A549 (cell line): ENCODE measurements at regions of chr9 and their contacts with region 1.

Region 1: DNA sequence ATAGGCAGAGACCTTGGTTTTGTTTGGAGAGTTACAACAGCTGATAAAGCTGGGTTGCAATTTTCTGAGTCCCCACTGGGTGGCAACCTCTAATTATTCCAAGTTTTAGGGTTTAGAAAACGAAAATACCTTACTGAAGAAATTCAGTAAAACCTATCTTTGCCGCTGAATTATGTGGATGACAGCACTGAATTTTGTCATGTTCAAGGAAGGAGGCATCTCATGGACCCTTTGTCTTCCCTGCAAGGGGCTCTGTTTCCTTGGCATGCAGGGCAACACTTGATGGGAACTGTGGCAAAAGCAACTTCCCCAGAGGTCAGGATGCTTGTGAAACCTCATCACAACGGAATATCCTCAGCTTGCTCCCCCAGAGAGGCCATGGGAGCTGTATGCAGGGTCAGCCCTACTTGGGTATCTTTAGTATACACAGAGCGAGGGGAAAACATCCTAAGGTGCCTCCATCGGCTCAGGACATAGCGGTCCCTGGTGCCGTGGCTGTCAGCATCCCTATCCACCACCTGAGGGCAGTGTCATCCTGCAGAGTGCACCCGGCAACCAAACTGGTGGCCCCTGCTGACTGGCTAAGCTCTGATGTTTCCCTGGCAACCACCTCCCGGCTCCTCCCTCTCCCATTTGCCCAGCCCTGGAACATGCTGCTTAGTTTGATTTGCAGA is 123.1 kb downstream of the RXRA start:
- DNase-seq: peak; percentile 92 to 98
- ATAC-seq: peak; percentile 92 to 97
- H3K4me3 ChIP-seq: no peak overlapping the region
- H3K27ac ChIP-seq: peak overlapping the region in 1 of 2 experiments; percentile 65; a peak in 2 of 6 replicates
- H3K4me1 ChIP-seq: peaks cover 9% of the 10 kb centered on the region
- CTCF ChIP-seq: peak; percentile 81
- EP300 ChIP-seq: no peak
- POLR2A ChIP-seq: no peak
- RAD21 ChIP-seq: peak; percentile 97 to 99

Region 2: GRCh38 chr9:134413890-134414731 is 35.2 kb before region 1 on chr9:
- CTCF ChIA-PET with region 1: no interaction called
- POLR2A ChIA-PET with region 1: no interaction called
- DNase-seq: peak; percentile 77 to 87
- ATAC-seq: peak; percentile 54 to 84
- H3K4me3 ChIP-seq: no peak overlapping the region
- H3K27ac ChIP-seq: peak overlapping the region; percentile 80 to 100
- H3K4me1 ChIP-seq: peaks cover 63% of the 10 kb centered on the region
- CTCF ChIP-seq: no peak
- EP300 ChIP-seq: no peak
- POLR2A ChIP-seq: no peak
- RAD21 ChIP-seq: peak; percentile 5 to 21; a peak in 2 of 5 replicates

Region 3: DNA sequence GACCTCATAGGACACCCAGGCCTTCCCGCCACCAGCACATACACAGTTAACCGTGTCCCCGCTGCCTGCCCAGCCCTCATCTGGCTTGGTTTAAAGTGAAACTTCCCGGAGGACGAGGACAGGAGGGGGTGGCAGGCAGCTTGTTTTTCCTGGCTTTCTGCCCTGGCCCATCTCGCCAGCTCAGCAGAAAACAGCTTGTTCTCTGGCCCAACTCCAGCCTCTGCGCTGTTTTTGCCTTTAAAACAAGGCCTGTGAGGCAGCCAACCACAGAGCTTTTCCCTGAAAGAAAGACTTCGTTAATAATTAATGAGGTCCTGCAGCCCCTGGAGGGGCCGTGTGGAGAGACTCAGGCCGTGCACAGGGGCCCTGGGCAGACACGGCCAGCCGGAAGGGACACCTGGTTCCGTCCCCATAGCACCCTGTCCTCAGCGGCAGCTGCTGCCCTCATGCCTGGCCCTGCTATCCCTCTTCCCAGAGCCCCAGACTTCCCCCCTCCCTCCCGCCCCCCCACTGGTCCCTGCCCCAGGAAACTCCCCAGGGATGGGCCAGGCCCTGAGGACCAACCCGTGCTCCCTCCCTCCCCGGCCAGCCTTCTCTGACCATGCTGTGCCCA is 14.4 kb before region 1 on chr9:
- CTCF ChIA-PET with region 1: interaction called, 27 read pairs
- POLR2A ChIA-PET with region 1: no interaction called
- DNase-seq: peak; percentile 65 to 88
- ATAC-seq: peak; percentile 57 to 76
- H3K4me3 ChIP-seq: no peak overlapping the region
- H3K27ac ChIP-seq: peak overlapping the region; percentile 80 to 88
- H3K4me1 ChIP-seq: peaks cover 46% of the 10 kb centered on the region
- CTCF ChIP-seq: no peak
- EP300 ChIP-seq: no peak
- POLR2A ChIP-seq: no peak
- RAD21 ChIP-seq: peak in 1 of 2 experiments; percentile 35; a peak in 3 of 5 replicates

Region 4: DNA sequence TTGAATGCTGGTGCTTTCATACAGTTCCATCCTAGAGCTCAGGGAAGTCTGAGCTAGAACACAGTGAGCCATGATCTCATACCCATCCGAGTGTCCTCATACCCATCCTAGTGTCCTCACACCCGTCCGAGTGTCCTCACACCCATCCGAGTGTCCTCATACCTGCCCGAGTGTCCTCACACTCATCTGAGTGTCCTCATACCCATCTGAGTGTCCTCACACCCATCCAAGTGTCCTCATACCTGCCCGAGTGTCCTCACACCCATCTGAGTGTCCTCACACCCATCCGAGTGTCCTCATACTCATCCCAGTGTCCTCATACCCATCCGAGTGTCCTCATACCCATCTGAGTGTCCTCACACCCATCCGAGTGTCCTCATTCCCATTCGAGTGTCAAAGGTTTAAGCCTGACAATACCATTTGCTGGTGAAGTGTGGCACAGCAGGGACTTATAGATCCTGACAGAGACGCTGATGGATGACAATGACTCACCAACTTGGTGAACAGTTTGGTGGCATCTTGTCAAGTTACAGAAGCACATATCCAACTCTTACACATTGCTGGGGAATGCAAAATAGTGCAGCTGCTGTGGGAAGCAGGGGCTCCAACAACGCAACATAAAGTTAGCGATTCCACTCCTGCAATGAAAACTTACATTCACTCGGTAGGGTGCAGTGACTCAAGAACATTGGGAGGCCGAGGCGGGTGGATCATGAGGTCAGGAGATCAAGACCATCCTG is 115.2 kb after region 1 on chr9:
- CTCF ChIA-PET with region 1: interaction called, 15 read pairs
- POLR2A ChIA-PET with region 1: no interaction called
- DNase-seq: no peak
- ATAC-seq: no peak
- H3K4me3 ChIP-seq: no peak overlapping the region
- H3K27ac ChIP-seq: no peak overlapping the region
- H3K4me1 ChIP-seq: no peaks in the 10 kb centered on the region
- CTCF ChIP-seq: no peak
- EP300 ChIP-seq: no peak
- POLR2A ChIP-seq: no peak
- RAD21 ChIP-seq: no peak

Region 5: GRCh38 chr9:134624827-134625181 is 175.4 kb after region 1 on chr9:
- CTCF ChIA-PET with region 1: interaction called, 13 read pairs
- POLR2A ChIA-PET with region 1: no interaction called
- DNase-seq: peak; percentile 71 to 72
- ATAC-seq: peak; percentile 80 to 93
- H3K4me3 ChIP-seq: no peak overlapping the region
- H3K27ac ChIP-seq: peak overlapping the region; percentile 87 to 88
- H3K4me1 ChIP-seq: peaks cover 49% of the 10 kb centered on the region
- CTCF ChIP-seq: no peak
- EP300 ChIP-seq: peak; percentile 46 to 74; a peak in 2 of 5 replicates
- POLR2A ChIP-seq: no peak
- RAD21 ChIP-seq: peak; percentile 25 to 30; a peak in 3 of 5 replicates

Region 6: DNA sequence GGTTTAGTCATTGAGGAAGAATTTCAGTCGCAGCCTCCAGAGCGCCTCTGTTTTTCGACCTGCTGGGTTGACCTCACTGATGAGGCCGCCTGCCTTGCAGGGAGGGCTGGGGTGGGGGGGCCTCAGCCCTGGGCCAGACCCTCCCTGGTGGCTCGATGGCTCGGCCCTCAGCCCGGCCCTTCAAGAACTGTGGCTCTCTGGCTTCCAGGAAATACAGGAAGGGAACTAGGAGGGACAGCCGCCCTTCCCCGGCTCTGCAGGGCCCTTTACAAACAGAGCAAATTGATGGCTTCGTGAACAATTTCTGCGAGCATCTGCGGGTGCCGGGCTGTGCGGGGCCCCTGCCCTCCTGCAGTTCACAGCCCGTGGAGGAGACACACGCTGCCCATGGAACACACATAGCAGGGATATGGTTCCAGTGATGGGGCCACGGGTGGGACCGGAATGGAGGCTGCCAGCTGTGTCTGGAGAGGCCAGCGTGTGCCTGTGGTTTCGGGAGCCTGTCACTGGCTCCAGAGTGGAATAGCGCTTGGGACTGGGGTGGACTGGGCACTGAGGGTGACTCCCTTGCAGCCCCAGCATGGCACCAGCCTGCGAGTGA is 231.8 kb after region 1 on chr9:
- CTCF ChIA-PET with region 1: interaction called, 70 read pairs
- POLR2A ChIA-PET with region 1: no interaction called
- DNase-seq: no peak
- ATAC-seq: no peak; a peak in 1 of 6 replicates
- H3K4me3 ChIP-seq: no peak overlapping the region
- H3K27ac ChIP-seq: peak overlapping the region in 1 of 2 experiments; percentile 60; a peak in 2 of 6 replicates
- H3K4me1 ChIP-seq: peaks cover 18% of the 10 kb centered on the region
- CTCF ChIP-seq: no peak
- EP300 ChIP-seq: no peak
- POLR2A ChIP-seq: no peak
- RAD21 ChIP-seq: no peak

Region 7: DNA sequence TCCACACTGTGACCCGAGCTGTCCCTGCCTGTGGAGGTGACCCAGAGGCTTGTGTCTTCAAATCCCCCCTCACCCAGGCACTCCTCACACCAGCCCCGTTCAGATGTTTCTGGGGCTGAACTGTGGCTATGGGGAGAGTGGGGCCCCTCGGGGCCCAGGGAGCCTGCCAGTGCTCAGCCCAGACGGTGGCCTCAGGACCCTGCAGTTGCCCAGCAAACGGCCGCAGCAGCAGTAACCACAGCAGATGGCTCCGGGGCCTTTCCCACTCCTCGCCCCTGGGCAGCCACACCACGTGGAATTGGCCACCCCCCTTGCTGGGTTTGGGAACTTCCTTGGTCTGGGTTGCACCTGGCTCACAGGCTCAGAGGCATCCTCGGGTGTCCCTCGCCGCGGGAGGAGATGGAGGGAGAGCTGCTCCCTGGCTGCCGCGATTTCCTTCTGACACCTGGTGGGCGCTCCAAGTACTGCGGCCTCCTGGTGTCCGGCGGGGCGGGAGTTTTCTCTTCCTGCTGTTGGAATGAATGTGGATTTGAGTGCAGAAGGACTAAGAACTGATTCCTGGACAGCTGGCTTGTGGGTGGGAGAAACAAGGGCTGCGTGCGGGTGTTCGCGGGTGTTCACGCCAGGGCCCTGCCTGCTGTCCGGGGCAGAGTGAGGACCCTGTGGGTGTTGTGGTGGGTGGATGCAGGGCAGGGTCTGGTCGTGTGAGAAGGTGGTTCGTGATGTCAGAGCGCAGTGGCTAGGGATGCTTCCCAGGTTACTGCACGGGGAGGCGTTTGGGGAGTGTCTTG is 289.7 kb after region 1 on chr9:
- CTCF ChIA-PET with region 1: interaction called, 63 read pairs
- POLR2A ChIA-PET with region 1: no interaction called
- DNase-seq: peak; percentile 45 to 78
- ATAC-seq: peak; percentile 62 to 84; a peak in 5 of 6 replicates
- H3K4me3 ChIP-seq: no peak overlapping the region
- H3K27ac ChIP-seq: 0 out of 6 replicates have a peak overlapping the region, but pooled peaks of 1 of the 2 experiments have one; percentile 15
- H3K4me1 ChIP-seq: peaks cover 6% of the 10 kb centered on the region
- CTCF ChIP-seq: peak; percentile 57
- EP300 ChIP-seq: no peak
- POLR2A ChIP-seq: no peak
- RAD21 ChIP-seq: peak; percentile 77 to 80